KBM-7 (cell line): ENCODE measurements at regions of chr12 and their contacts with region 1.

Region 1: DNA sequence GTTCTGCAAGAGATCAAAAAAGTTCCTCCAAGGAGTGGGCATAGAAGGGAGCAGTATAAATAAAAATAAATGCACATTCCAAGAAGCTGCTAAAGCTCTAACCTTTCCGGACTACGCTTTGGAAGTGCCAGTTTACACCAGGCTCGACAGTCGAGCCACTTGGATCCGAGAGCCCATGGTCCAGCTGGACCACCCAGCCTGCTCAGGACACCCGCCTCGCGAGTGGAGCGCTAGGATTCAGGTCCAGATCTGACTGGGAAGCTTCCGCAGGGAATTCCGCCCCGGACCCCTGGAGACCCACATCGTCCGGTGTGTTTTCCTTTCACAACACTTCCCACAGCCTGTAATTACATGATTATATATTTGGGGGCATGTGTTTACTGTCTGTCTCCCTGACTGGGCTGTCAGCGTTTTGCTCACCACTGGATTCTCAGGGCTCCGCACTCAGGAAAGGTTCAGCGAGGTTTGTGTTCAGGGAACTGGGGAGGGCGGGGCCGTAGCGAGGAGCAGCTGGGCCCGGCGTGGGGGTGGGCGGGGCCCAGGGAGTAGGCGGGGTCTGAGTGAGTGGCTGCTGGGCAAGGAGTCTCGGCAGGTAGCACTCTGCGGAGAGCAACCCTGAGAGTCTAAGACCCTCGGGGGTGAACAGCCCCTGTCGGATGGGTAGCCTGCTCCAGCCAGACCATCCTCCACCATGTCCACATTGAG is 52.3 kb upstream of the TMEM263 start:
- DNase-seq: no peak

Region 2: GRCh38 chr12:106247674-106248311 is 655.6 kb before region 1 on chr12 and contains the start of gene CKAP4:
- in situ Hi-C with region 1: loop called (anchors 25 kb)
- DNase-seq: peak; percentile 36

Region 3: DNA sequence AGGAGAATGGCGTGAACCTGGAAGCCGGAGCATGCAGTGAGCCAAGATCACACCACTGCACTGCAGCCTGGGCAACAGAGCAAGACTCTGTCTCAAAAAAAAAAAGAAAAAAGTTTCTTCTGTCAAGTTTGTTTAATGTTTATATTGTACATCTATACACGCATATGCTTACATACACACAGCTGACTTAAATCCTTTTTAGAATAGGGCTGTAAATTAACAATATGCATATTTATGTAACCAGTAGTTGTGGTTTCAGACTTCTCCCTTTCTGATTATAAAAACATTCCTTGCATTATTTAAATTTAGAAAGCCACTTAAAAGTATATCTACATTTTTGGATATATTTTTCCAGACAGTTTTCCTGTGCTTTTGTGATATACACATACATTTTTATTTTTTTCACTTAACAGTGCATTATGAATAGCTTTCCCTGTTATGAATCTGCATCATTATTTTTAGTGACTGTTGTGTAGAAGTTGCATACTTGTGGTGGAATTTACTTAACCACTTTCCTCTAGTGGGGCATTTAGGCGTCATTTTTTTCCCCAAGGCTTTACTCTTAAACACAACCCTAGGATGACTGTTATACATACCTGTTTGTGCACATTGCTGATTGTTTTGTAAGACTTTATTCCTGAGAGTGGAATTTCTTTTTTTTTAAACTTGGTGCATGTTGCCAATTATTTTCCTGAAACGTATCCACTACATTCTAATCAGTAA is 516.4 kb before region 1 on chr12:
- in situ Hi-C with region 1: loop called (anchors 25 kb)
- DNase-seq: no peak

Region 4: GRCh38 chr12:107057071-107057818 is 153.9 kb after region 1 on chr12:
- in situ Hi-C with region 1: no loop called
- DNase-seq: no peak